Prostate gland (tissue), 2 donors: ENCODE measurements at regions of chr12 and their contacts with region 1.

Region 1: DNA sequence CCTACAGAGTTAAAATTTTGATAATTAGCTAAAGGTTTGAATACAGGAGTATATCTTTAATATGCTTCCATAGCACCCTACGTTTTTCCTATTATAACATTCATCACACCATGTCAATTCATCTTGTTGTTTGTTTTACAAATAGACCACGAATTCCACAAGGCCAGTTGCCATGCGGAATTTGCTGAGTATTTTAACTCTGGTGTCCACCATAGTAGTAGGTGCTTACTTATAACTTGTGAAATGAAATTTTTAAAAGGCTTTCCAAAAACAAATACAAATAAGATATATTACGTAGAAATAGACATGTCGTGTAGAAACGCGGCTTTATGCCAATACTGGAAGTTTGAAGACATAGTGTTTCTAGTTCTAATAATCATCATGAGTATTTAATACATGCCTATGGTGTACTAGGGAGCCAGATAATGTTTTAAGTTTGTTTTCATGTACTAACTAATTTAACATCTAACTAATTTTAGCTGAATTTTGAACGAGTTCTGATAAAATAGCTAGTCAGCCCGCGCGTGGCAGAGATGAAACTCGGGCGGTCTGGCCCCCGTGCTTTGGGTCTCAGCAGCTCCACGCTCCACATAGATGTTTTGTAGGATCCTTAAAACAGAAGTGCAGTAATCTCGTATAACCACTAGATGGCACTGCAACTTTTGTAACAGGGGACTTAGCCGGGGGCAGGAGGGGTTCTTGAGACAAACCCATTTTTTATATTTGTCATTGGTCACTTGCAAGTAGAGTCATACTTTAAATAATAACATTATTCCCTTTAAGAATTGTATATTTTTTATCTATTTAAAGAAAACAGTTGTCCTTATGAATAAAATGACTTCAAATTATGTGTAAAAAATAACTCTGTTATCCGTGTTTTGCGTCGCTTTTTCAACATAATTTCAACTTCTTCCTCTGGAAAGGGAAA is 10.2 kb downstream of the CD69 start:
- DNase-seq: peak; percentile 28
- H3K4me3 ChIP-seq: no peak overlapping the region
- H3K27ac ChIP-seq: no peak overlapping the region
- H3K4me1 ChIP-seq: no peaks in the 10 kb centered on the region
- H3K27me3 ChIP-seq: no peaks in the 10 kb centered on the region
- CTCF ChIP-seq: peak; percentile 61 to 72 (median 71)
- POLR2A ChIP-seq: no peak

Region 2: GRCh38 chr12:9673404-9674225 is 76.9 kb before region 1 on chr12:
- intact Hi-C with region 1: no loop called
- DNase-seq: no peak
- H3K4me3 ChIP-seq: no peak overlapping the region
- H3K27ac ChIP-seq: no peak overlapping the region
- H3K4me1 ChIP-seq: no peaks in the 10 kb centered on the region
- H3K27me3 ChIP-seq: no peaks in the 10 kb centered on the region
- CTCF ChIP-seq: no peak
- POLR2A ChIP-seq: no peak

Region 3: GRCh38 chr12:9813821-9814809 is 63.6 kb after region 1 on chr12:
- intact Hi-C with region 1: no loop called
- DNase-seq: peak; percentile 60
- H3K4me3 ChIP-seq: peak overlapping the region; percentile 5 to 11
- H3K27ac ChIP-seq: no peak overlapping the region
- H3K4me1 ChIP-seq: no peaks in the 10 kb centered on the region
- H3K27me3 ChIP-seq: no peaks in the 10 kb centered on the region
- CTCF ChIP-seq: peak; percentile 31 to 89 (median 66)
- POLR2A ChIP-seq: no peak

Region 4: GRCh38 chr12:9925708-9926393 is 175.3 kb after region 1 on chr12:
- intact Hi-C with region 1: loop called (anchors 5 kb)
- DNase-seq: no peak
- H3K4me3 ChIP-seq: no peak overlapping the region
- H3K27ac ChIP-seq: no peak overlapping the region
- H3K4me1 ChIP-seq: no peaks in the 10 kb centered on the region
- H3K27me3 ChIP-seq: no peaks in the 10 kb centered on the region
- CTCF ChIP-seq: peak; percentile 17 to 65 (median 41)
- POLR2A ChIP-seq: no peak